CD8-positive, alpha-beta T cell (primary cell): ENCODE measurements at regions of chr15 and their contacts with region 1.

Region 1: GRCh38 chr15:68218847-68219798 is 10.4 kb downstream of the CLN6 start:
- DNase-seq: peak in 2 of 9 experiments; percentile 2 to 21
- ATAC-seq: no peak
- H3K4me3 ChIP-seq: no peak overlapping the region
- H3K4me3 Mint-ChIP-seq: no peak overlapping the region
- H3K27ac ChIP-seq: no peak overlapping the region
- H3K27ac Mint-ChIP-seq: no peak overlapping the region
- H3K4me1 ChIP-seq: no peaks in the 10 kb centered on the region
- H3K4me1 Mint-ChIP-seq: peaks cover 2% of the 10 kb centered on the region
- H3K27me3 ChIP-seq: no peaks in the 10 kb centered on the region
- H3K27me3 Mint-ChIP-seq: no peaks in the 10 kb centered on the region
- CTCF ChIP-seq: no peak

Region 2: DNA sequence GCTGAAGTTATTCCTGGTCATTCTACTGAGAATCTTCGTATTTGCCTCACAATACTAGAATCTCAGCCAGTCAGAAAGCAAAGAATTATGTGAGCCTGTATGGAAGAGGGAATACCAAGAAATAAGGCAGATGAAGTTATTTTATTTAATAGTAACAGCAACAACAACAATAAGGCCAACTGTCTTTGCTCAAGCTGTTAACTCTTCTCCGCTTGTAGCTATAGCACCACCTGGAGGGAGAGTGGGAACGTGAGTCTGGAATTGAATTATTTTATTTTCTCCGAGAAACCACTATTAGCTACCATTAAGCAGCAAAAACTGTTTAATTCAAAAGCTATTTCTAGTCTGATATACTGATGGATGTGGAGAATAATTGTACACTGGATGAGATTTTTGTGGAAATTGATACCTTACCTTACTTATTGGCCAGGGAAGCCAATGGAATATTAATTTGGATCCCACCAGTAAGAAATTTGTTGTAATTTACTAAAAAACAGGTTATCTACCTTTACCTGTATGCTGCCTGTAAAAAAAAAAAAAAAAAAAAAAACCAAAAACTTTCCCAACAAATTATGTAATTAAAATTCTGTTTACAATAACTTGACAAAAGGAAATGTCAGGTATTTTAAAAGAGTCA is 64.1 kb before region 1 on chr15:
- CTCF ChIA-PET with region 1: no interaction called
- POLR2A ChIA-PET with region 1: no interaction called
- intact Hi-C with region 1: loop called in 1 of 2 experiments (anchors 5 kb)
- DNase-seq: peak in 4 of 9 experiments; percentile 12 to 46 (median 24)
- ATAC-seq: no peak
- H3K4me3 ChIP-seq: no peak overlapping the region
- H3K4me3 Mint-ChIP-seq: no peak overlapping the region
- H3K27ac ChIP-seq: no peak overlapping the region
- H3K27ac Mint-ChIP-seq: no peak overlapping the region
- H3K4me1 ChIP-seq: no peaks in the 10 kb centered on the region
- H3K4me1 Mint-ChIP-seq: peaks cover 3% of the 10 kb centered on the region
- H3K27me3 ChIP-seq: no peaks in the 10 kb centered on the region
- H3K27me3 Mint-ChIP-seq: no peaks in the 10 kb centered on the region
- CTCF ChIP-seq: peak; percentile 48

Region 3: GRCh38 chr15:69093127-69094013 is 874.2 kb after region 1 on chr15:
- CTCF ChIA-PET with region 1: no interaction called
- POLR2A ChIA-PET with region 1: no interaction called
- intact Hi-C with region 1: no loop called
- DNase-seq: no peak
- ATAC-seq: no peak
- H3K4me3 ChIP-seq: no peak overlapping the region
- H3K4me3 Mint-ChIP-seq: no peak overlapping the region
- H3K27ac ChIP-seq: no peak overlapping the region
- H3K27ac Mint-ChIP-seq: no peak overlapping the region
- H3K4me1 ChIP-seq: no peaks in the 10 kb centered on the region
- H3K4me1 Mint-ChIP-seq: no peaks in the 10 kb centered on the region
- H3K27me3 ChIP-seq: no peaks in the 10 kb centered on the region
- H3K27me3 Mint-ChIP-seq: peaks cover 11% of the 10 kb centered on the region
- CTCF ChIP-seq: no peak